ENCODE measurements at regions of chr1 and their contacts with region 1.

Region 1: GRCh38 chr1:216310776-216311175 is 112.5 kb downstream of the USH2A start:
- DNase-seq: peak; percentile 50
- ATAC-seq: peak; percentile 55; the same call in 1 of the 2 replicates
- H3K4me3 ChIP-seq: no peak overlapping the region
- H3K27ac ChIP-seq: peak overlapping the region; percentile 4; the same call in 1 of the 2 replicates
- H3K4me1 ChIP-seq: peaks cover 10% of the 10 kb centered on the region
- H3K27me3 ChIP-seq: no peaks in the 10 kb centered on the region
- CTCF ChIP-seq: peak; percentile 67
- POLR2A ChIP-seq: no peak
- RAD21 ChIP-seq: peak; percentile 70

Region 2: GRCh38 chr1:216045400-216045799 is 265.4 kb before region 1 on chr1:
- CTCF ChIA-PET with region 1: no interaction called
- POLR2A ChIA-PET with region 1: no interaction called
- dilution Hi-C with region 1: no loop called
- in situ Hi-C with region 1: no loop called
- intact Hi-C with region 1: no loop called
- DNase-seq: peak; percentile 98
- ATAC-seq: peak; percentile 94
- H3K4me3 ChIP-seq: no peak overlapping the region
- H3K27ac ChIP-seq: peak overlapping the region; percentile 54; the same call in 1 of the 2 replicates
- H3K4me1 ChIP-seq: peaks cover 6% of the 10 kb centered on the region
- H3K27me3 ChIP-seq: no peaks in the 10 kb centered on the region
- CTCF ChIP-seq: no peak
- POLR2A ChIP-seq: no peak
- RAD21 ChIP-seq: no peak

Region 3: GRCh38 chr1:216566641-216567205 is 255.9 kb after region 1 on chr1:
- CTCF ChIA-PET with region 1: interaction called, 5 read pairs
- POLR2A ChIA-PET with region 1: no interaction called
- dilution Hi-C with region 1: no loop called
- in situ Hi-C with region 1: no loop called
- intact Hi-C with region 1: loop called (anchors 5 kb)
- DNase-seq: peak; percentile 45
- ATAC-seq: peak; percentile 62
- H3K4me3 ChIP-seq: no peak overlapping the region
- H3K27ac ChIP-seq: no peak overlapping the region
- H3K4me1 ChIP-seq: no peaks in the 10 kb centered on the region
- H3K27me3 ChIP-seq: no peaks in the 10 kb centered on the region
- CTCF ChIP-seq: peak; percentile 56
- POLR2A ChIP-seq: no peak
- RAD21 ChIP-seq: peak; percentile 56

Region 4: DNA sequence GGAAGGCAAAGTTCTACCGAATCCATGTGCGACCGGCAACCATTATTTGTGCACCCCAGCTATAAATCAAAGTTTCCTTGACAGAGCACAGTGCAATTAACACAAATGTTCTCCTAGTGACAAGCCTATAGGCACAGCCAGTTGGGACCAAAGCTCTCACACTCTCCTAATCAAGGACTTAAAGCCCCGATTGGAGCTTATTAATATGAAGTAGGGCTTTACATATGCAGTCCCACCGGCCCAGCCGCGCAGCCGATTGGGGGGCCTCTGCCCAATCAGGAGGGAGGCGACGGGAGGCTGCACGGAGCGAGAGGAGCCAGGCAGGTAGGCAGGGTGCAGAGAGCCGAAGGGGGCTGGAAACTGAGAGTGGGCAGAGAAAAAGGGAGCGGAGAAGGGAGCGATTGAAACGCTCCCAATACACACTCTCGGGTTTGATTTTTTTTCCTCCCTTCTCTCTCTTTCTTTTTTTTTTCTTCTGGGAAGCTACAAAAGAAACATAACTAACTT is 412.6 kb after region 1 on chr1 and contains the start of gene ESRRG:
- CTCF ChIA-PET with region 1: no interaction called
- POLR2A ChIA-PET with region 1: no interaction called
- dilution Hi-C with region 1: no loop called
- in situ Hi-C with region 1: no loop called
- intact Hi-C with region 1: loop called (anchors 5 kb)
- DNase-seq: peak; percentile 17
- ATAC-seq: peak; percentile 93
- H3K4me3 ChIP-seq: peak within 1 kb of the TSS; percentile 37
- H3K27ac ChIP-seq: no peak within 1 kb of the TSS
- H3K4me1 ChIP-seq: peaks cover 2% of the 10 kb centered on the region; the same call in 1 of the 2 replicates
- H3K27me3 ChIP-seq: no peaks in the 10 kb centered on the region
- CTCF ChIP-seq: no peak
- POLR2A ChIP-seq: no peak
- RAD21 ChIP-seq: no peak
- total RNA-seq, gene ESRRG: 0.54 and 0.56 TPM in 2 replicates

Region 5: DNA sequence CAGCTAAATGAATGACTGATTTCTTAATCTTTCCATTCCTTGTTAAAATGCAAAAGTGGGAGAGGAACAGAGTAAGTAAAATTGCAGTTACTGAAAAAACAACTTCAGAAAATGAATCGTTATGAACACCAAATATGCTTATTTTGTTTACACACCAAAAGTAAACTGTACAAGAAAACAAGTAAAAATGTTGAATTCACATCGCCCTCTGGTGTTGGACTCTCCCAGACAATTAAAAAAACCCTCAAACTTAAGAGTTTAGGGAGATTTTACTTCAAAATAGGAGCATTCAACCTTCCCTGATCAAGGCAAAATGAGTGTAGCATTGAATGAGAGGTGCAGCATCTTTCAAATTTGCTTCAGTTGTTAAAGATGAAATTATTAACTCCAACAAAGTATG is 431.8 kb after region 1 on chr1:
- CTCF ChIA-PET with region 1: interaction called, 4 read pairs
- POLR2A ChIA-PET with region 1: no interaction called
- dilution Hi-C with region 1: no loop called
- in situ Hi-C with region 1: no loop called
- intact Hi-C with region 1: loop called (anchors 2 kb)
- DNase-seq: peak; percentile 30
- ATAC-seq: no peak
- H3K4me3 ChIP-seq: no peak overlapping the region
- H3K27ac ChIP-seq: no peak overlapping the region
- H3K4me1 ChIP-seq: no peaks in the 10 kb centered on the region
- H3K27me3 ChIP-seq: no peaks in the 10 kb centered on the region
- CTCF ChIP-seq: peak; percentile 53
- POLR2A ChIP-seq: no peak
- RAD21 ChIP-seq: peak; percentile 36

Region 6: GRCh38 chr1:217660353-217661062 is 1349.7 kb after region 1 on chr1:
- CTCF ChIA-PET with region 1: no interaction called
- POLR2A ChIA-PET with region 1: no interaction called
- dilution Hi-C with region 1: no loop called
- in situ Hi-C with region 1: no loop called
- intact Hi-C with region 1: loop called (anchors 10 kb)
- DNase-seq: peak; percentile 90
- ATAC-seq: peak; percentile 93
- H3K4me3 ChIP-seq: no peak overlapping the region
- H3K27ac ChIP-seq: peak overlapping the region; percentile 74
- H3K4me1 ChIP-seq: peaks cover 5% of the 10 kb centered on the region
- H3K27me3 ChIP-seq: no peaks in the 10 kb centered on the region
- CTCF ChIP-seq: peak; percentile 78
- POLR2A ChIP-seq: no peak
- RAD21 ChIP-seq: peak; percentile 75